A673 (cell line): ENCODE measurements at regions of chr9 and their contacts with region 1.

Region 1: DNA sequence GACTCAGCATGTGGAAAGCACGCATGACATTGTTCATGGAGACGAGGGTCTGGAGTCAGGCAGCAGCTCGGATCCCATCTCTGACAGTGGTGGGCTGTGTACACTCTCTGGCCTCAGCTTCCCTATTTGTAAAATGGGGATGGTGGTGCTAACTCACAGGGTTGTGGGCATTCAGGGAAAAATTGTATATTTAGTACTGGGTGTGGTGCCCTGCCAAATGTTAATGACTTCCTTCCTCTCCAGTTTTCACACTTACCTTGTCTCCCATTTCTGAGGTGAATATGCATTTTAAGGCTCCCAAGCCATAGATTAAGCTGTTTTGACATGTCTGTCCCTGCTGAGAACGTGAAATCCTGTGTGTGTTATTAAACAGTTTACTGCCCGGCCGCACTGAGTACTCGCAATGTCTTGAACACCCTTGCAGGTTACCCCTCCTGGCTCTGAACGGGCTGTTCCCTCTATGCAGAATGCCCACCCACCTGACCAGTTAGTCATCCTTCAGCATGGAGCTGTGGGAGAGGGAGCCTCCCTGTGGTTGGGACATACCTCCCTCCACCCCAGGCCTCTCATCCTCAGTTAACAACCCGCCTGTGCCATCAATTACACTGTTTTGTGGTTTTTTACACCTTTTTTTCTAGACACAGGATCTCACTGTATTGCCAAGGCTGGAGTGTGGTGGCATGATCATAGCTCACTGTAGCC is 25.8 kb downstream of the TJP2 start:
- DNase-seq: no peak
- H3K4me3 ChIP-seq: no peak overlapping the region
- H3K27ac ChIP-seq: no peak overlapping the region
- H3K4me1 ChIP-seq: no peaks in the 10 kb centered on the region
- H3K27me3 ChIP-seq: no peaks in the 10 kb centered on the region
- CTCF ChIP-seq: no peak

Region 2: DNA sequence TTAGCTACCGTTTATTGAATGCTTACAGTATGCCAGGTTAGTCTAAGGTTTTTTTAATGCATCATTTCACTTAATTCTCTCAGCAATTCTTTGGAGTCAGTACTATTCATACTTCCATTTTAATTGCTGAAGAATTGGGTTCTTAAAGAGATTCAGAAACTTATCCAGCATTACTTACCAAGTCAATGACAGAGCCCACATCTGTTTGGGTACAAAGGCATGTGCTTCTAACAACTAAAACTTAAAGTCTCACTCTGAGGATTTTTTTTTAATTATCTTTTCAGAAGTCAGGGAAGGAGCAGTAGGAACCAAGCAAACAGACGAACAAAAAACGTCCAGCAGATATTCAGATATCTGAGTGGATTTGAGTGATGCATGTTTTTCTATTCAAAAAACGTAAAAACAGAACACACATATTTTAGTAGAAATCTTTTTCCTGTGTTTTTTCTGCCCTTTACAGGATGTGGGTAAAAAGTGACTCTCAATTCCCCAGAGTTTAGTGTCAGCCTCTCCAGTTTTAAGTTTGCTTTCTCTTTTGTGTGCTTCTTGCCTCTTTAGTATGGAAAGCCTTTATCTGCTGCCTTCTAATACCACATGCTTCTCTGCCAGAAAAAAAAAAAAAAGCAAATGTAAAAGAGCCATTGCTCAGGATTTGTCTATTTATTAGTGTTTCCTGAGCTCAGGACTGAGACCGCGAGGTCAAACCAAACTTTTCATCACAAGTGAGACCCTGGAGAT is 304.0 kb before region 1 on chr9:
- CTCF ChIA-PET with region 1: no interaction called
- POLR2A ChIA-PET with region 1: no interaction called
- intact Hi-C with region 1: loop called (anchors 10 kb)
- DNase-seq: no peak
- H3K4me3 ChIP-seq: no peak overlapping the region
- H3K27ac ChIP-seq: no peak overlapping the region
- H3K4me1 ChIP-seq: no peaks in the 10 kb centered on the region
- H3K27me3 ChIP-seq: peaks cover 37% of the 10 kb centered on the region
- CTCF ChIP-seq: no peak

Region 3: DNA sequence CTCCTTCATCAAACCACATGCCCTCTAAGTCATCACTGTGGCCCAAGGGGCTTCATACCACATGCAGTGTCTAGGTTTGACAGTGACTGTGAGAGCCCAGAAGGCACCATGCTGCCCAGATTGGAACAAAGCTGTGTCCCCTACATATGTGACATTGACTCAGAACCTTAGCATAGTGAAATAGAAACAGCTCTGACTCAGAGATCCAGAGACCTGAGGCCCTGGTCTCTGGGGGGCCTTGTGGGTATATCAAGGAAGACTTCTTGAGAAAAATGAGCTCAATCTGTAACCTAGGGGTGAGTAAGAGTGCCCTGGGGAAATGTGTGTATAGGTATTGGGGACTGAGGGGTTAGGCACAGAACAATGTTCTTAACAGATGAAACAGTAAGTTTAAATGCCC is 118.0 kb after region 1 on chr9:
- CTCF ChIA-PET with region 1: no interaction called
- POLR2A ChIA-PET with region 1: no interaction called
- intact Hi-C with region 1: no loop called
- DNase-seq: no peak
- H3K4me3 ChIP-seq: no peak overlapping the region
- H3K27ac ChIP-seq: no peak overlapping the region
- H3K4me1 ChIP-seq: no peaks in the 10 kb centered on the region
- H3K27me3 ChIP-seq: peaks cover 27% of the 10 kb centered on the region
- CTCF ChIP-seq: no peak